ENCODE measurements at regions of chr2 and their contacts with region 1.

Region 1: GRCh38 chr2:75403991-75404428 is 156.7 kb downstream of the EVA1A start:
- ATAC-seq: peak in 4 of 8 experiments; percentile 36 to 91 (median 77)
- H3K4me3 ChIP-seq: peak overlapping the region in 1 of 5 donors; percentile 5
- H3K27ac ChIP-seq: peak overlapping the region in 1 of 2 donors; percentile 81
- H3K4me1 ChIP-seq: peaks cover 20 to 36% of the 10 kb centered on the region in 2 donors

Region 2: DNA sequence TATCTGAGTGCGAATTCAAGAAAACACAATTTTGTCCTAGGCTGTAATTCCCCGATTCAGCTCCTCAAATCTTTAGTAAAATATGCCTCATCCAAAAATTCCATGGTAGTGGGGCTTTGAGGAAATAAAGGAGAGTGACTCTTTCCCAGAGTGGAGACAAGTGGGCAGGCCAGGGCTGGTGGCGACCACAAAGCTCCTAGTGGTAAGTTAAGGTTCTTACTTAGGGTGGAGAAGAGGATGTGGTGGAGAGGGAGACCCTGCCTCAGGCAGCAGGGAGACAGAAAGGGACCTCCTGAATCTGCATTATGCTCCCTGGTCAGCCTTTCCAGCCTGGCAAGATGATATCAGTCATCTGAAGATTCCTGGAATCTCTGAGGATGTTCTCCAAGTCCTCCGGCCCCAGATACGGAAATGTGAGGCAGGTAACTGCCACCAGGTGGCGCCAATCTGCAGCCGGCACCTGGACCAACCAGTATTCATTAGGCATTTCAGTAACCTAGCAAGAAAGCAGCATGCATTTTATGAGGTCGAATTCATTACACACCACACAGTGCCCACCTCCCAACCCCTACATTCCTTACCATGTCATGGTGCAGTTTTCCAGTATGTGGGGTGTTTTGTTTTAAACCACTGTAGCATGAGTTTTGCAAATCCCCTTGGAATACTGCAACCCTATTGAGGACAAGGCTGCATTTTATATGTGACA is 339.2 kb before region 1 on chr2:
- in situ Hi-C with region 1: loop called in 2 of 9 experiments (anchors 25 kb)
- ATAC-seq: peak; percentile 48 to 94 (median 72)
- H3K4me3 ChIP-seq: no peak overlapping the region
- H3K27ac ChIP-seq: no peak overlapping the region
- H3K4me1 ChIP-seq: peaks cover 11 to 14% of the 10 kb centered on the region in 2 donors

Region 3: GRCh38 chr2:75199428-75200011 is 204.5 kb before region 1 on chr2 and contains the start of gene TACR1:
- in situ Hi-C with region 1: loop called in 1 of 9 experiments (anchors 25 kb)
- ATAC-seq: peak; percentile 69 to 88 (median 83)
- H3K4me3 ChIP-seq: peak within 1 kb of the TSS; percentile 31 to 47 (median 41)
- H3K27ac ChIP-seq: no peak within 1 kb of the TSS
- H3K4me1 ChIP-seq: no peaks in the 10 kb centered on the region
- total RNA-seq, gene TACR1: 0.25 to 6.9 (median 1.7) TPM

Measured in motor neuron (in vitro differentiated cells).